Posterior cingulate gyrus (tissue), 11 donors: ENCODE measurements at regions of chr2 and their contacts with region 1.

Region 1: DNA sequence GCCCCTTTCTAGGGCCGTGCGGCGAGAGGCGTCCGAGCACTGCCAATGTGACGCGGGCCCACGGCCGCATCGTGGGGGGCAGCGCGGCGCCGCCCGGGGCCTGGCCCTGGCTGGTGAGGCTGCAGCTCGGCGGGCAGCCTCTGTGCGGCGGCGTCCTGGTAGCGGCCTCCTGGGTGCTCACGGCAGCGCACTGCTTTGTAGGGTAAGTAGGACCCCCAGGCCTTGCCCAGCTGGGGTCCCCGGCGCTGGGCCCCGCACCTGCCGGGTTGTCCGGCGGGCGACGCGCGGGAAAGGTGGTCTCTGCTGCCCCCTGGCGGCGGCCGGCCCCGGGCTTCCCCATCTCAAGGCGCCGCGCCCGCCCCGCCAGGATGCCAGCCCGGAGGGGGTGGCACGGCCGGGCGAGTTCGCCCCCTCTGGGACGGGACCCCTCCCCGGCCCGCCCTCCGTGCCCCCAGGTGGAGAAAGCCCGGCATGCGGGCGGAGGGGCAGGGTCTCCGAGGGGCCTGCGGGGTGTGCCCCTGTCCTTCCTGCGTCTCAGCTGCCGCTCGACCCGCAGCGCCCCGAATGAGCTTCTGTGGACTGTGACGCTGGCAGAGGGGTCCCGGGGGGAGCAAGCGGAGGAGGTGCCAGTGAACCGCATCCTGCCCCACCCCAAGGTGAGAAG is 1.9 kb downstream of the PRSS56 start:
- DNase-seq: peak in 6 of 10 donors; percentile 60 to 95 (median 72)

Region 2: DNA sequence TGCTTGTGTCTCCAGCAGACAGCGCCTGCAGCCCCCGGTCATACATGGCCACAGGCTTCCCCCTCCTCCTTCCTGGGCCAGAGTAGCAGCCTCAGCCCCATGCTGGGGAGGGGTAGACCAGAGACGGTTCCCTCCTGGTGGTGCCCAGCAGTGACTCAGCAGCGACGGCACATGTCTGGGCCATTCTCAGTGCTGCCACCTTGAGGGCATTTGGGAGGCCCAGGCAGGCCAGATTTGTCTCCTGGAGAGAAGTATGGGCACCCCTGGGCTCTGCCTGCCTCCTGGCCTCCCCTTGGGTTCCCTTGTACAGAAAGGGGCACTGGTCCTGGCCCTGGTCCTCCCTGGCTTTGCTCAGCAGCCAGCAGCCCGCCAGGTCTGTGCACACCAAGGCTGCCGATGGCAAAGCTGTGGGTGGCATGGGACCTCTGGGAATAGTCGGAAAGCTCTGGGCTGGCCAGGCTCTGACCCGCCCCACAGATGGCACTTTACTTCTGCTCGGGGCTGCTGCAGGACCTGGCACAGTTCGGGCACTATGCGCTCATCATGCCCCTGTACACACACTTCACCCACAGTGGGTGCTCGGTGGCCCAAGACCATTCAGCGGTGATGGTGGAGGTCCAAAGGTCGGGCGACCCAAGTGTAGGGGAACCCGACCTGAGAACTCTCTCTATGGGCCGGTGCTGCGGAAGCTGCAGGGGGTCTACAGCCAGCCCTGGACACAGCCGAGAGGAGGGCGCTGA is 77.5 kb before region 1 on chr2:
- intact Hi-C with region 1: loop called (anchors 1 kb)
- DNase-seq: peak in 4 of 10 donors; percentile 25 to 91 (median 44)

Region 3: DNA sequence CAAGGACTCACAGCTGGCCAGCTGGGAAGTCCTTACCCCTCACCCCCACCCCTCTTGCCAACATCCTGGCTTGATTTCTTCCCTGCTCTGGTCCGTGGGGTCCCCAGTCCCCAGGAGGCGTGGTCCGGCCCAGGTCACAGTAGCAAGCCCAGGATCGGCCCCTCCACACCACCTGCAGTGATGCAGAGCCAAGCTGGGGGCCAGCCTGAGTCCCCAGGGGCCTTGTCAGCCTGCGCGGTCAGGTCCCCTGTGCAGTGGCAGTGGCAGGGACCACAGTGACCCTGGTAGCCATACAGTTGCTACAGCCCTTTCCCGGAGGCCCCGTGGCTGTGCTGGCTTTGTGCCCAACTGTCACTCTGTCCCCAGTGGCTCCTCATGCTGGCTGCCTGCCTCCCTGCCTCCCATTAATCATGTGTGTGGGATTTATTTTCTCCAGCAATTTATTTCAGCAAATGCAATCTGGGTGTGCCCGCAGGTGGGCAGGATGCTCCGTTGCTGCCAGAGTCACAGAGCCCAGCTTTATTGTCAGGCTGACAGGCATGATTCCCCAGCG is 10.7 kb before region 1 on chr2:
- intact Hi-C with region 1: no loop called
- DNase-seq: peak in 1 of 10 donors; percentile 30